ENCODE measurements at regions of chr5 and their contacts with region 1.

Region 1: GRCh38 chr5:108260117-108260857 is 121.6 kb downstream of the FBXL17 start:
- DNase-seq: peak; percentile 56 to 79
- ATAC-seq: peak; percentile 96

Region 2: DNA sequence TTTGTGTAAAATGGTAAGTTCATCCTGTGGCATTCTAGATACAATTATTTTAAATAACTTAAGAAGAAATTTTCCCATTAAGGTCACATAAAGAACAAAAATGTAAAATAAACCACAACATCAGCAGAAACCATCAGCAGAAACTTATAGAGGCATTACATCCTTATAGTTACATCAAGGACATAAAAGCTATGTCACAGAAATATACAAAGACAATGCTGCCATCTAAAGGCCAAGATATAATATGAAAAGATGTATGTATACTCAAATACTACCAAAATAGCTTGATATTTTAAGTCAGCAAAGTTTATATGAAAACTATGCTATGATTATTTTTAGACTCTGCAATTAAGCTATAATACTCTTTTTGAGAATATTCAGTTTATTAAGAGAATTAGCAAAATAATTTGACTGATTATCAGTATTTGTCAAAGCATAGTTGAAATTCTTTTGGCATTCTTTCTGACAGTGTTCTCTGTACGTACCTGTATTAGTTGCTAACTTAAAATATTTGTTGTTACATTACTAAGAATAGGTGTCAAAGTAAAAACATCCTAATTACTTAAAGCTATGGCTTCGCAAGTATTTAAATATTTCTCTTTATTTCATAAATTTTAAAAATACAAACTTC is 85.4 kb after region 1 on chr5:
- intact Hi-C with region 1: loop called in 1 of 2 experiments (anchors 10 kb)
- DNase-seq: no peak
- ATAC-seq: peak; percentile 78

Region 3: GRCh38 chr5:108681079-108681921 is 421.0 kb after region 1 on chr5:
- intact Hi-C with region 1: no loop called
- DNase-seq: peak in 1 of 2 donors; percentile 8
- ATAC-seq: peak; percentile 89